ENCODE measurements at regions of chr9 and their contacts with region 1.

Region 1: DNA sequence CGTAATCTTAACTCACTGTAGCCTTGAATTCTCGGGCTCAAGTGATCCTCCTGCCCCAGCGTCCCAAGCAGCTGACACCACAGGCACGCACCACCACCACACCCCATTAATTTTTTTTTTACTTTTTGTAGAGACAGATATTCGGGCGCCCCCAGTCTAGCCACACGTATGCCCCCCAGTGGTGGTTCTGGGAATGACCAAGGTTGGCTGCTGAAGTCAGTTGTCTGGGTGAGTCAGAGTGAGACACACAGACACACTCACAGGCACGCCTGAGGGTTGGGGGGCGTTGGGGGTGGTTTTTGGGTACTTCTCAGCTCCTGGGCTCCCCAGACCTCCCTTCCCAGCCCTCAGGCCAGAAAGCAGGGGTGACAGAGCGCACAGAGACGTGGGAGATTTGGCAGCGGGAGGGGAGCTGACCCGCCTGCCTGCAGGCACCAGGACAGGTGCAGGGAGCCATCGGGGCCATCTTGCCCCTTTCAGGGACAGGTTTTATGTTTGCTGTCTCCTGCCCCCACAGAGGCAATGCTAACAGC is 4.2 kb upstream of the ENTPD8 start:
- DNase-seq: peak; percentile 87

Region 2: GRCh38 chr9:137077010-137077747 is 368.2 kb before region 1 on chr9 and contains the start of gene UAP1L1:
- intact Hi-C with region 1: no loop called
- DNase-seq: peak; percentile 87
- total RNA-seq, gene UAP1L1: 6.5 TPM

Region 3: DNA sequence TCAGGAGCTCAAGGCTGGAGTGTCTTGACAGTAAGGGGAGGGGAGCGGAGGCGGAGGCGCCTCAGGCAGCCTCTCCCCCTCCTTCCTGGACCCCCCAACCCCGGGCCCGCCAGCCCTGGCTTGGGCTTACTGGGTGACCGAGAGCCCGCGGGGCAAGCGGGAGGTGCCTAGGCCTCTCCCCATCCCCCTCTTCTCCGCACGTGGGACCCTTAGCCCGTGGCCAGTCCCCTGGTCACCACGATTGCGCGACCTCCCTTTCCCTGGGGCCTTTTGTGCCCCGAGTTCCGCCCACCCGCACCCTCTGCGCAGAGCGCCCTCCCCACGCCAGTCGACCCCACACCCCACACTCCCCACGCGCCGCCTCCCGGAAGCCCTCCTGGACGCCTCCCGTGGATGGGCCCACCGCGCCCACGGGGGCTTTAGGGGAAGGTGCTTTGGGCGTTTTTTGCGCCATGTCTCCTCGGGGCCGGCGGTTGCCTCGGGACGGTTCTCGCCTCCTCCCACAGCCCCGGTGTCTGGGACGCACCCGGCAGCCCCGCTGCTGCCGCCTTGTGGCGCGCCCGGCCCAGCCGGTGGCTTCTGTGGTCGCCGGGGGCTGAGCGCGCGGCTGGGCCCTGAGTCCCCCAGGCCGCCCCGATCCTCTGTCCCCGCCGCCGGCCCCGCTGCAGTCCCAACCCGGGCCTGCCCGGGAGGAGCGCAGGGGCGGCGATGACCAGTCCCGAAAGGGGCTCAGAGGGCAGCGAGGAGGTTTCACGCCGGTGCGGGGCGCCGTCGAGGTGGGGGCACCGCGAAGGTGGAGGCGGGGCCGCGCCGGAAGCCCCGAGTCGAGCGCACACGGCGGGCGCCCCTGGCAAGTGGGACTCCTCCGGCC is 164.6 kb before region 1 on chr9:
- intact Hi-C with region 1: loop called (anchors 5 kb)
- DNase-seq: no peak

Region 4: DNA sequence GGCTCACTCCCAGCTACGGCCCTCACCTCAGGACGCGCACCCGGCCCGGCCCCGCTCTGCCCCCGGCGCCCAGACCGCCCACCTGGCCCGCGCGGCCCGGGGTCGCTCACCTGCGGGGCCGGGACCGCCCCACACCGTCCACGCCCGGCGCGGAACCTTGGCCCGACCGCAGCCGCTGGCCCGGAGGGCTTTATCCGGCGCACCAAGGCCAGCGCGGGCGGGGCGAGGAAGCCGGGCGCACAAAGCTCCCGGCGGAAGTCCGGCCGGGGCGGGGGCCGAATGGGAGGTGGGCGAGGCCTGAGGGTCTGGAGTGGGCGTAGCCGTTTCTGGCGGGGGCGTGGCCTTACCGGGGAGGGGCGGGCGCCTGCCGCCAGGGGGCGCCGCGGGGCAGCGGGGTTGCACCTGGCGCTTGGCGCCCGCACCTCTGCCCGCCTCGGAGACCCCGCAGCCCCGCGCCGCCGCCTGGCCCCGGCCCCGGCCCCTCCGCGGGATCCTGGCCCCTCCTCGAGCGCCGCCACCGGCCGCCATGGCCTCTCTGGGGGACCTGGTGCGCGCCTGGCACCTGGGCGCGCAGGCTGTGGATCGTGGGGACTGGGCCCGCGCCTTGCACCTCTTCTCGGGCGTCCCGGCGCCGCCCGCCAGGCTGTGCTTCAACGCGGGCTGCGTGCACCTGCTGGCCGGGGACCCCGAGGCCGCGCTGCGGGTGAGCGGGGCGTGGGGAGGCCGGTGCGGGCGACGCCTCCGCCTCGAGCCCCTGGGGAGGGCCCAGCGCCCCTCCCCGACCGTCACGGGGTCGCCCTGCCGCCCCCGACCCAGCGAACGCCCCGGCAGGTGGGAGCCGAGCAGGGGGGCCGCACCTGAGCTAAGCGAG is 22.1 kb before region 1 on chr9 and contains the starts of genes EXD3 and NOXA1:
- intact Hi-C with region 1: no loop called
- DNase-seq: peak; percentile 96
- total RNA-seq, gene EXD3: 11.3 TPM
- total RNA-seq, gene NOXA1: 3.3 TPM